ENCODE measurements at regions of chr18 and their contacts with region 1.

Region 1: GRCh38 chr18:48049757-48050156 is 119.3 kb upstream of the SMAD2 start:
- DNase-seq: no peak
- H3K4me3 ChIP-seq: no peak overlapping the region
- H3K27ac ChIP-seq: no peak overlapping the region
- H3K4me1 ChIP-seq: no peaks in the 10 kb centered on the region
- H3K27me3 ChIP-seq: peaks cover 0 to 5% of the 10 kb centered on the region in 2 experiments
- CTCF ChIP-seq: no peak
- POLR2A ChIP-seq: no peak

Region 2: DNA sequence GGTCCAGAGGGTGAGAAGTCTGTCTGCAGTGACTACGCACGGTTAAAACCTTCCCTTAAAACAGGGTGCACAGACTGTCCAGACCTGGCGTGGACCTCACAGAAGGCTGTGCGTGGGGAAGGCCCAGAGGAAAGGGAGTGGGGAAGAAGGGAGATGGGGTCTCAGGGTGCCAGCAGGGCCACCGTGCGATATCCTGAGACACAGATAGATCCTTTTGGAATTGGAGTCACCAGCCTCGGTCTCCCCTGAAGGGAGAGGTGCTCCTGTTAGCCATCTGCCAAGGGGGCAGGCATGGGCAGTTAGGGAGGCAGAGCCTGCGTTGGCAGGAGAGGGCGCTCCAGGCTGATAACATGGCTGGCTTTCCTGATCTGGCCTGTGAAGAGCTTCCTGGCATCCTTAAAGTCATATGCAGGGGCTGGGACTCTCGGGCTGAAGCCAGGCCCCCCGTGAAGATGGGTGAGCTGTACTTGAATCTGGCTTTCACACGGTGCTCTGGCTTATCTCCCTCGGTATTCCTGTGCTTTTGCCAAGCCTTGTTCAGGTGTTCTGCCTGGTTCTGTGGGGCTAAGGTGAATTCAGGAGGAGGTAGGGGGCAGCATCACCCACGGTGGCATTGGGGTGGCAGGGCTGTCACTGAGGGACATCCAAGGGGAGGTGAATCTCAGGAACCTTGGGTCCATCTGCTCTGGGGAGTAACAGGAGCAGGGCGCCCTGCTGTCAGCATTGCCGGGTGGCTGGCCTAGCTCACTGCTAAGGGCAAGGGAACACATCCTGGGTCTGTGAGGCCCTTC is 12.1 kb before region 1 on chr18:
- CTCF ChIA-PET with region 1: interaction called, 10 read pairs
- POLR2A ChIA-PET with region 1: no interaction called
- dilution Hi-C with region 1: no loop called
- intact Hi-C with region 1: no loop called
- DNase-seq: peak; percentile 9
- H3K4me3 ChIP-seq: no peak overlapping the region
- H3K27ac ChIP-seq: no peak overlapping the region
- H3K4me1 ChIP-seq: no peaks in the 10 kb centered on the region
- H3K27me3 ChIP-seq: no peaks in the 10 kb centered on the region
- CTCF ChIP-seq: peak; percentile 10 to 29
- POLR2A ChIP-seq: no peak

Region 3: GRCh38 chr18:48866028-48866733 is 816.4 kb after region 1 on chr18:
- CTCF ChIA-PET with region 1: no interaction called
- POLR2A ChIA-PET with region 1: no interaction called
- dilution Hi-C with region 1: no loop called
- intact Hi-C with region 1: no loop called
- DNase-seq: peak; percentile 91
- H3K4me3 ChIP-seq: no peak overlapping the region
- H3K27ac ChIP-seq: no peak overlapping the region
- H3K4me1 ChIP-seq: peaks cover 3% of the 10 kb centered on the region
- H3K27me3 ChIP-seq: no peaks in the 10 kb centered on the region
- CTCF ChIP-seq: no peak
- POLR2A ChIP-seq: no peak

Measured in endothelial cell of umbilical vein (primary cell).